Heart left ventricle (tissue), 16 donors: ENCODE measurements at regions of chr9 and their contacts with region 1.

Region 1: GRCh38 chr9:101513351-101513750 is 20.3 kb upstream of the RNF20 start:
- DNase-seq: no peak
- ATAC-seq: peak in 2 of 4 donors; percentile 39 to 58
- H3K4me3 ChIP-seq: no peak overlapping the region
- H3K27ac ChIP-seq: peak overlapping the region in 2 of 12 donors; percentile 26 to 44
- H3K4me1 ChIP-seq: peaks cover 0 to 22% (median 7%) of the 10 kb centered on the region in 12 donors
- H3K27me3 ChIP-seq: peaks cover 0 to 5% (median 0%) of the 10 kb centered on the region in 9 donors
- CTCF ChIP-seq: no peak
- POLR2A ChIP-seq: no peak

Region 2: DNA sequence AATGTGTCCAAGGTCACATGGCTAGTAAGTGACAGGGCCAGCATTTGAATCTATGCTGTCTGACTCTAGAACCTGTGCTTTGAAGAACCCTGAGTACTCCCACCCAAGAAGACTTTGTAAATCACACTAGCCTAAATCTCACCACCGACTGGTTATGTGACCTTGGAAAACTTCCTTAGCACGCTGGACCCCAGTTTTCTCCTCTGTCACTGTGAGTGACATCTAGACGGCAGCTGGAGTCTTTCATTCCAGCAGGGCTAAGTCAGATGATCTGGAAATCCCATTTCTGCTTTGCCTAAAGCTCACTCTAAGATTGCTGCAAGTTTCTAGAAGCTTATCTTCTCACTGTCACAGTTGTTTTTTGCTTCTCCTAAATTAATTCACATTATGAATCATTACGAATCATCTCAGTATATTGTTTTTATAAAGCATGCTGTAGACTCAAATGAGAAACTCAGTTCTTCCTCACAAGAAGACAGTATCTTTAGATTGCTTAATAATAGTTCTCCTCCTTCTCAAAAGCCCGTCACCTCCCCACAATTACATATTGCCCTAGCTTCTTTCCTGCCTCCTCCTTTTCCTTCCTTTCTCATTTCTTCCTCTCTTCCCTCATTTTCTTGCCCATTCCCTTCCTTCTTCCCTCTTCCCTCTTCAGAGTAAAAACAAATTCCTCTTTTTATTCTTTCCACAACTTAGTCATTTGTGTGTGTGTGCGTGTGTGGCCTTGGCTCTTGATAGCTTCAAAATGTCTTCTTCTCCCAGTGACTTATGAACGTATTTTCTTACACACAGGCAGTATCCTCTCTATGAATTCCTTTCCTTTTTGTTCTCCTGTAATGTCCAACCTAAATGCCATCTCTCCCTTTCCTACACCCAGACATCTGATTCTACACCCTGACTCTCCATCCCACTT is 94.6 kb before region 1 on chr9:
- intact Hi-C with region 1: no loop called
- DNase-seq: no peak
- ATAC-seq: peak in 1 of 4 donors; percentile 33
- H3K4me3 ChIP-seq: no peak overlapping the region
- H3K27ac ChIP-seq: peak overlapping the region in 3 of 12 donors; percentile 6 to 15 (median 14)
- H3K4me1 ChIP-seq: peaks cover 0 to 13% (median 0%) of the 10 kb centered on the region in 12 donors
- H3K27me3 ChIP-seq: no peaks in the 10 kb centered on the region
- CTCF ChIP-seq: no peak
- POLR2A ChIP-seq: no peak

Region 3: DNA sequence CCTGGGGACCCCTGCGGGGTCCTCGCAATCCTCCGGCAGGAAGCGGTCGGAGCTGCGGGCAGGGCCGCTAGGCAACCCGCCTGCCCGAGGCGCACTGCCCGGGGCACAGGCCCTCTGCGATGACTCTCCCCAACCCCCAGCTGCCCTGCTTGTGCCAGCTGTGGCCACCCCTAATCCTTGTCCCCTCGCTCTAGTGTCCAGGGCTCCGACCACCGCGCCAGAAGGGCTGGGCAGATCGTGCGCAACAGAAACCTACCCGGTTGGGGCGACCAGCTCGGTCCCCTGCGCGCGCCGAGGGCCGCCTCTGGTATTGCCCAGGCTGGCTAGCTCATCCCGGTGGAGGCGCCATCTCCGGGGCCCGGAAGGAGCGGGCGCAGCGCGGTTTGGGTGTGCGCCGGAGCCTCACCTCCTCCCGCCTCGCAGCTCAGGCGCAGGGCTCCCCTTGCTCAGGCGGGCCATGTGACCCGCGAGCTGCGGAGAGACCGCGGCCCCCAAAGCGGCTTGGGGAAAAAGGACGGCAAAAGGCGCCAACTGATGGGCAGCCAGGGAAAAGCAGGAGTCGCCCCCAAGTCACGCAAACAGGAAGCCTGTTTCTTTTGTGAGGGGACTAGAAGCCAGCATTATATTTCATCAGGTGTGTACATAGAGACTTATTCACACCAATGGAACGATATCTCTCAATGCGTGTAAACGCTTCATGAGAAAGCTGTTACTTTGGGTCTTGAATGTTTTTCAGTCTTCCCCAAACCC is 26.5 kb before region 1 on chr9:
- intact Hi-C with region 1: loop called in 1 of 10 experiments (anchors 1 kb)
- DNase-seq: peak; percentile 45 to 71 (median 56)
- ATAC-seq: peak; percentile 54 to 87 (median 86)
- H3K4me3 ChIP-seq: peak overlapping the region; percentile 53 to 84 (median 72)
- H3K27ac ChIP-seq: peak overlapping the region; percentile 76 to 97 (median 90)
- H3K4me1 ChIP-seq: peaks cover 0 to 40% (median 8%) of the 10 kb centered on the region in 12 donors
- H3K27me3 ChIP-seq: peaks cover 0 to 26% (median 0%) of the 10 kb centered on the region in 9 donors
- CTCF ChIP-seq: peak in 6 of 12 donors; percentile 22 to 39 (median 28)
- POLR2A ChIP-seq: no peak